ENCODE measurements at regions of chr17 and their contacts with region 1.

Region 1: GRCh38 chr17:50853015-50853615 is 13.0 kb downstream of the TOB1 start:
- DNase-seq: peak in 2 of 9 experiments; percentile 6 to 25
- ATAC-seq: no peak
- H3K4me3 ChIP-seq: no peak overlapping the region
- H3K4me3 Mint-ChIP-seq: peak overlapping the region; percentile 77
- H3K27ac ChIP-seq: no peak overlapping the region
- H3K27ac Mint-ChIP-seq: peak overlapping the region; percentile 91
- H3K4me1 ChIP-seq: peaks cover 9% of the 10 kb centered on the region
- H3K4me1 Mint-ChIP-seq: peaks cover 15% of the 10 kb centered on the region
- H3K27me3 ChIP-seq: no peaks in the 10 kb centered on the region
- H3K27me3 Mint-ChIP-seq: no peaks in the 10 kb centered on the region
- CTCF ChIP-seq: no peak

Region 2: DNA sequence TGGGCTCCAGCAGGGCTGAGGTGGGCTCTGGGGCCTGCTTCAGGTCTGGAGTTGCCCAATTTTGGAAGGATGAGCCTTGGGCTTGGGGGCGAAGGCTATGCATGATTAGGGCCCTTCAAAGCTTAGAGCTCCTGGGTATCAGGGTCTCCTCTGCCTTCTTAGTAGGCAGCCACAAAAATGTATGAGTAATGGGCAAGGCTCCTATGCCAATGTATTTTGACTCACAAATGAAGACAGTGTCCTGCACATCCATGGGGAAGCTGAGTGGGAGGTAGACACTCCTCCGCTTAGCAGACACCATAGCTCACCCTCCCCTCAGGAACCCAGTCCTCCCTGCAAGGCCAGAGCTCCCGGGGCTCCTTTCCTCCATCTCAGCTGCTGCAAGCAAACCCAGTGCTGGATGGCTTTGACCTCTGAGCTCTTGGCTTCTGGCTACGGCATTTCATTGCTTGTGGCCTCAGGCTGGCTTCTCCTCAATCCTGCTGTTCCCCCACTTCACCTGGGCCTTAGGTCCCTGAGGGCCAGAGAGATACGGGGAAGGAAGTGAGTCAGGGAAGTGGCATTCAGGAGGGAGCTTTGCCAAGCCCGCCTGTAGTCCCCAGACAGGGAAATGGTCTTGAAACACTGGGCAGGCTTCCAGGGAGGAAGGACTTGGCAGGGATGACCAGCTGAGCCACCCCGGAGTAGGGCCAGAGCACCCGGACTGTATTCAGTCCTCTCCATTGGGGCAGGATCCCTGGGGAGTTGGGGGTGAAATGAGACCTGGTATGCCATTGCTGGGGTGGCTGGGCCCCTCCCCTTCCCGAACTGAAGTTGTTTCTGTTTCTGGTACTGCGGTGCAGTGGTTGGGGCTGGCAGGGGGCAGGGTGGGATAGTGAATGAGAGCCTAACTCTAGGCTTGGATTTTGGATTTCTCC is 214.0 kb before region 1 on chr17:
- CTCF ChIA-PET with region 1: no interaction called
- POLR2A ChIA-PET with region 1: no interaction called
- intact Hi-C with region 1: no loop called
- DNase-seq: no peak
- ATAC-seq: no peak
- H3K4me3 ChIP-seq: no peak overlapping the region
- H3K4me3 Mint-ChIP-seq: no peak overlapping the region
- H3K27ac ChIP-seq: no peak overlapping the region
- H3K27ac Mint-ChIP-seq: no peak overlapping the region
- H3K4me1 ChIP-seq: peaks cover 5% of the 10 kb centered on the region
- H3K4me1 Mint-ChIP-seq: no peaks in the 10 kb centered on the region
- H3K27me3 ChIP-seq: peaks cover 0 to 15% of the 10 kb centered on the region in 2 experiments
- H3K27me3 Mint-ChIP-seq: peaks cover 37% of the 10 kb centered on the region
- CTCF ChIP-seq: no peak

Region 3: GRCh38 chr17:50783193-50783660 is 69.9 kb before region 1 on chr17:
- CTCF ChIA-PET with region 1: interaction called, 20 read pairs
- POLR2A ChIA-PET with region 1: no interaction called
- intact Hi-C with region 1: no loop called
- DNase-seq: peak; percentile 62 to 87 (median 79)
- ATAC-seq: peak; percentile 81
- H3K4me3 ChIP-seq: no peak overlapping the region
- H3K4me3 Mint-ChIP-seq: no peak overlapping the region
- H3K27ac ChIP-seq: no peak overlapping the region
- H3K27ac Mint-ChIP-seq: no peak overlapping the region
- H3K4me1 ChIP-seq: peaks cover 19% of the 10 kb centered on the region
- H3K4me1 Mint-ChIP-seq: peaks cover 29% of the 10 kb centered on the region
- H3K27me3 ChIP-seq: no peaks in the 10 kb centered on the region
- H3K27me3 Mint-ChIP-seq: peaks cover 9% of the 10 kb centered on the region
- CTCF ChIP-seq: peak; percentile 92

Region 4: GRCh38 chr17:50841949-50842354 is 11.2 kb before region 1 on chr17:
- CTCF ChIA-PET with region 1: interaction called, 35 read pairs
- POLR2A ChIA-PET with region 1: interaction called, 3 read pairs
- intact Hi-C with region 1: no loop called
- DNase-seq: peak in 8 of 9 experiments; percentile 21 to 67 (median 51)
- ATAC-seq: peak; percentile 69
- H3K4me3 ChIP-seq: no peak overlapping the region
- H3K4me3 Mint-ChIP-seq: no peak overlapping the region
- H3K27ac ChIP-seq: no peak overlapping the region
- H3K27ac Mint-ChIP-seq: no peak overlapping the region
- H3K4me1 ChIP-seq: no peaks in the 10 kb centered on the region
- H3K4me1 Mint-ChIP-seq: no peaks in the 10 kb centered on the region
- H3K27me3 ChIP-seq: no peaks in the 10 kb centered on the region
- H3K27me3 Mint-ChIP-seq: no peaks in the 10 kb centered on the region
- CTCF ChIP-seq: peak; percentile 62

Region 5: DNA sequence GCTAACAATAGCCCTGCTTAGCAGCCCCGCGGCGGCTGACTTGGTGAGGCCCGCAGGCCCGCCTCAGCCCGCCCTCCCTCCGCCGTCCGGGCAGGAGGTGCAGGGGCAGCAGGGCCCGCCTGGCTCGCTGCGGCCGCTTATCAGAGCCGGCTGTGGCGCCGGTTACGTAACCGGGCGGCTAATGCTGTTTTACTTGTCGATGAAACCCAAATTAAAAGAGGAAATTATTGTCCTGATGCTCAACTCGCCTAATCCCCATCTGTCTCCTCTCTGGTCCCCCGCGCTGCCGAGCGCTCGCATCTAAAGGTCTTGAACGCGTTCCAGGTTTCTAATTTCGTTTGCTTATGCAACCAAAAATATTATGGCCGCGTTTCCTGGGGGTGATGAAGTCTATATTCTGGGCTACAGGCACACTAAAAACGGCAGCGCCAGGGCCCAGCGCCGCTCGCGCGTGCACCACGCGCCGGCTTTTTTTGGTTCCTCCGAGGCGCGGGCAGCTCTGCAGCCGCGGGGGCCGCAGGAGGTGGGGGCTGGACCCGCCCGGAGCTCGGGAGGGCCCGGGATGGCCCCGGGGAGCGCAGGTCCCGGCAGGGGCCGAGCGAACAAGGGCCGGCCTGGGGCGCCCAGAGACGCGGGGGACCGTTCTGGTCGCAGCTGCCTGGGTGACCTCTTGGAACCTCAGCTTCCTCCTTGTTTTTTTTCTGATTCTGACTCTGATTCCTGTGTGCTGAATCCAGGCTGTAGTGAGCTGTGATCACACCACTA is 78.2 kb after region 1 on chr17:
- CTCF ChIA-PET with region 1: interaction called, 21 read pairs
- POLR2A ChIA-PET with region 1: interaction called, 10 read pairs
- intact Hi-C with region 1: no loop called
- DNase-seq: peak in 7 of 9 experiments; percentile 39 to 79 (median 56)
- ATAC-seq: peak; percentile 75
- H3K4me3 ChIP-seq: peak overlapping the region; percentile 46 to 55
- H3K4me3 Mint-ChIP-seq: peak overlapping the region; percentile 90
- H3K27ac ChIP-seq: peak overlapping the region; percentile 71
- H3K27ac Mint-ChIP-seq: peak overlapping the region; percentile 99
- H3K4me1 ChIP-seq: peaks cover 30% of the 10 kb centered on the region
- H3K4me1 Mint-ChIP-seq: peaks cover 41% of the 10 kb centered on the region
- H3K27me3 ChIP-seq: no peaks in the 10 kb centered on the region
- H3K27me3 Mint-ChIP-seq: no peaks in the 10 kb centered on the region
- CTCF ChIP-seq: no peak

Region 6: DNA sequence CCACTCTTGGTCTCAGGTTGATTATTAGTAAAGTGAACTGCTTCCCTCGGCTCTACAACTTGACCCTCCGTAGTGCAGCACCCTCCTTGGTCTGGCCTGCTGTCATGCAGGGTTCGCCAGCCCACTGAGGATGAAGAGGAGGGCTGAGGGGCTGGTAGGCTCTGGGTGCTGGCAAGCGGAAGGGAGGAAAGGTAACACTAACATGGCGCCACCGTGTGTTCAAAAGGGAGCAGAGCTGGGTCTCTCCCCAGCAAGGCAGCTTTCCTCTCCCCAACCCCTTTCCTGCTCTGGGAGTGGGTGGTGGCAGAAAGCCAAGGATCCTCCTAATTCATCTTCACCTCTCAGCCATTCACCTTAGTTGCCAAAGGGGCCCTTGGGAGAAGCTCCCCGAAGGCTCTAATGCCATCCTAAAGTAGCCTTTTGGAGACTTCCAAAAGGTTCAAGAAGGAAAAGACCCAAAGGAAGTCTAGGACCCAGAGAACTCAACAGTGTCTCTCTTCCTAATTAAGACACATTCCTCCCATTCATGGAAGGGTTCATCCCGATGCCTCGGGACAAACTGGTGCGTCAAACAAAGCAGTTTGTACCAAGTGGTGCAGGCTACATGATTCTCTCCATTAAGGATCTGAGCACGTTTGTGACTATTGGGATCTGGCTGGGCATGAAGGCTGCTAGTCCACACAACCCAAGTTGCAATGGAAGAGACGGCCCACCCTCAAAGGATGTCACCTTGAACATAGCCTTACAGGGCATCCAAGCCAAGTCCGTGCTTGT is 103.8 kb after region 1 on chr17:
- CTCF ChIA-PET with region 1: interaction called, 761 read pairs
- POLR2A ChIA-PET with region 1: interaction called, 11 read pairs
- intact Hi-C with region 1: loop called (anchors 1 kb)
- DNase-seq: peak; percentile 39 to 81 (median 71)
- ATAC-seq: peak; percentile 93
- H3K4me3 ChIP-seq: no peak overlapping the region
- H3K4me3 Mint-ChIP-seq: no peak overlapping the region
- H3K27ac ChIP-seq: no peak overlapping the region
- H3K27ac Mint-ChIP-seq: no peak overlapping the region
- H3K4me1 ChIP-seq: peaks cover 4% of the 10 kb centered on the region
- H3K4me1 Mint-ChIP-seq: peaks cover 3% of the 10 kb centered on the region
- H3K27me3 ChIP-seq: no peaks in the 10 kb centered on the region
- H3K27me3 Mint-ChIP-seq: no peaks in the 10 kb centered on the region
- CTCF ChIP-seq: peak; percentile 79

Region 7: GRCh38 chr17:51056813-51057510 is 203.8 kb after region 1 on chr17:
- CTCF ChIA-PET with region 1: no interaction called
- POLR2A ChIA-PET with region 1: no interaction called
- intact Hi-C with region 1: loop called in 1 of 2 experiments (anchors 1 kb)
- DNase-seq: peak in 2 of 9 experiments; percentile 46 to 61
- ATAC-seq: no peak
- H3K4me3 ChIP-seq: no peak overlapping the region
- H3K4me3 Mint-ChIP-seq: no peak overlapping the region
- H3K27ac ChIP-seq: no peak overlapping the region
- H3K27ac Mint-ChIP-seq: peak overlapping the region; percentile 50
- H3K4me1 ChIP-seq: no peaks in the 10 kb centered on the region
- H3K4me1 Mint-ChIP-seq: peaks cover 14% of the 10 kb centered on the region
- H3K27me3 ChIP-seq: no peaks in the 10 kb centered on the region
- H3K27me3 Mint-ChIP-seq: no peaks in the 10 kb centered on the region
- CTCF ChIP-seq: peak; percentile 48